Naive thymus-derived CD4-positive, alpha-beta T cell (primary cell): ENCODE measurements at regions of chr10 and their contacts with region 1.

Region 1: DNA sequence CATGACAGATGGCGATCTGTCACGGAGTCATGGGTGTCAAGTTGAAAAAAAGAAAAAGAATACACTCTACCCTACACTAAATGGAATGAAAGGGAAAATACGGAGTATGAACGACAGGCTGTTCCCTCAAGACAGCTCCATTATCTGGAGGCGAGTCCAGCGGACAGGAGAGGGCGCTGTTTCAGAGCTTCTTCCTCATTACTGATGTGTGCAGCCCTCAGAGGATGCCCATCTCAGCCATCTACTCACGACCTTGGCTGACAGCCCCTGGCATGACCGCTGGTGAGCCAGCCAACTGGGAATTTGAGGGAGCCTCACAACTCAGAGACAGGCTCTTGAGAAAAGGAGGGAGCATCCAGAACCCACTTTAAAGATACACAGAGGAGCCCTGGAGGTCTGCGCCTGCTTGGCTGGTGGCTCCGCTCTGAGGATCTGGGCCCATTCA is 49.6 kb upstream of the SMNDC1 start:
- DNase-seq: peak in 8 of 9 donors; percentile 49 to 75 (median 58)
- ATAC-seq: peak; percentile 73
- H3K4me3 ChIP-seq: no peak overlapping the region
- H3K4me3 Mint-ChIP-seq: peak overlapping the region in 6 of 10 donors; percentile 17 to 48 (median 25)
- H3K27ac ChIP-seq: no peak overlapping the region
- H3K27ac Mint-ChIP-seq: peak overlapping the region in 7 of 9 donors; percentile 14 to 97 (median 53)
- H3K4me1 ChIP-seq: peaks cover 43 to 47% of the 10 kb centered on the region in 2 donors
- H3K4me1 Mint-ChIP-seq: peaks cover 33 to 57% (median 50%) of the 10 kb centered on the region in 7 donors
- H3K27me3 ChIP-seq: no peaks in the 10 kb centered on the region
- H3K27me3 Mint-ChIP-seq: no peaks in the 10 kb centered on the region

Region 2: GRCh38 chr10:110137142-110137545 is 217.2 kb before region 1 on chr10:
- CTCF ChIA-PET with region 1: no interaction called
- POLR2A ChIA-PET with region 1: no interaction called
- intact Hi-C with region 1: loop called in 1 of 2 experiments (anchors 1 kb)
- DNase-seq: peak in 7 of 9 donors; percentile 48 to 67 (median 64)
- ATAC-seq: peak; percentile 85
- H3K4me3 ChIP-seq: no peak overlapping the region
- H3K4me3 Mint-ChIP-seq: peak overlapping the region in 1 of 10 donors; percentile 19
- H3K27ac ChIP-seq: peak overlapping the region; percentile 4
- H3K27ac Mint-ChIP-seq: peak overlapping the region; percentile 2 to 83 (median 45)
- H3K4me1 ChIP-seq: peaks cover 14% of the 10 kb centered on the region in 2 donors
- H3K4me1 Mint-ChIP-seq: peaks cover 13 to 38% (median 29%) of the 10 kb centered on the region in 7 donors
- H3K27me3 ChIP-seq: no peaks in the 10 kb centered on the region
- H3K27me3 Mint-ChIP-seq: no peaks in the 10 kb centered on the region

Region 3: GRCh38 chr10:110192552-110192951 is 161.8 kb before region 1 on chr10:
- CTCF ChIA-PET with region 1: no interaction called
- POLR2A ChIA-PET with region 1: no interaction called
- intact Hi-C with region 1: no loop called
- DNase-seq: no peak
- ATAC-seq: no peak
- H3K4me3 ChIP-seq: no peak overlapping the region
- H3K4me3 Mint-ChIP-seq: no peak overlapping the region
- H3K27ac ChIP-seq: no peak overlapping the region
- H3K27ac Mint-ChIP-seq: peak overlapping the region in 1 of 9 donors; percentile 2
- H3K4me1 ChIP-seq: no peaks in the 10 kb centered on the region
- H3K4me1 Mint-ChIP-seq: peaks cover 0 to 9% (median 0%) of the 10 kb centered on the region in 7 donors
- H3K27me3 ChIP-seq: peaks cover 0 to 10% of the 10 kb centered on the region in 2 donors
- H3K27me3 Mint-ChIP-seq: peaks cover 12 to 77% (median 33%) of the 10 kb centered on the region in 5 donors

Region 4: DNA sequence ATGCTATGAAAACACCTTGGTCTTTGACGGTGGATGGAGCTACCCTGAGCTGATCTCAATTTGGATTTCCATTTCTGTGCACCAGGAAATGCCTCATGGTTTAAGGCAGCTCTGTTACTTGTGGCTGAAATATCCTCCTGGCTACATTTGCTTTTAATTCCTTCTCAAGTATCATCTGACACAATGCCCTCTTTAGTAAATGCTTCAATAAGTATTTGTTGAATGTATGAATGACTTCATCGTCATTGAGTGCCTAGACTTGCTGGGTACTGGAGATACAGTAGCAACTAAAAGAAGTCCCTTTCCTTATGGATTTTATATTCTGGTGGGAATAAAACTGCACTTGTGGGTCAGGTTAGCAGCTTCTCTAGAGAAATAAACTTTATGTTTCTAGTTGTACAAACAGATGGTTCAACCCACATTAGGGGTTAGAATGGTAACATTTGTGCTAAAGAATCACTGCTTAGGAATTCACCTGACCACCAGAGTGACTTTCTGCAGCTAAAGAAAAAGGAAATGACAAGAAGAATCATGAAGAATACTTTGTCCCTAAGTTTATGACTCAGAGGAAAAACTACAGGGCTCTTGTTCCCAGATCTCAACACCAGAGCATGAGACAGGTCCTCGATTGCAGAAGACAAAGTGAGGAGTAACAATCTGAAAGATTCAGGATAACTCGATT is 27.9 kb before region 1 on chr10:
- CTCF ChIA-PET with region 1: no interaction called
- POLR2A ChIA-PET with region 1: no interaction called
- intact Hi-C with region 1: no loop called
- DNase-seq: no peak
- ATAC-seq: no peak
- H3K4me3 ChIP-seq: no peak overlapping the region
- H3K4me3 Mint-ChIP-seq: no peak overlapping the region
- H3K27ac ChIP-seq: no peak overlapping the region
- H3K27ac Mint-ChIP-seq: peak overlapping the region in 1 of 9 donors; percentile 21
- H3K4me1 ChIP-seq: no peaks in the 10 kb centered on the region
- H3K4me1 Mint-ChIP-seq: peaks cover 0 to 33% (median 0%) of the 10 kb centered on the region in 7 donors
- H3K27me3 ChIP-seq: no peaks in the 10 kb centered on the region
- H3K27me3 Mint-ChIP-seq: peaks cover 0 to 4% (median 0%) of the 10 kb centered on the region in 5 donors

Region 5: GRCh38 chr10:110376021-110376766 is 21.9 kb after region 1 on chr10:
- CTCF ChIA-PET with region 1: no interaction called
- POLR2A ChIA-PET with region 1: no interaction called
- intact Hi-C with region 1: no loop called
- DNase-seq: no peak
- ATAC-seq: peak; percentile 32
- H3K4me3 ChIP-seq: no peak overlapping the region
- H3K4me3 Mint-ChIP-seq: no peak overlapping the region
- H3K27ac ChIP-seq: no peak overlapping the region
- H3K27ac Mint-ChIP-seq: no peak overlapping the region
- H3K4me1 ChIP-seq: no peaks in the 10 kb centered on the region
- H3K4me1 Mint-ChIP-seq: peaks cover 0 to 12% (median 0%) of the 10 kb centered on the region in 7 donors
- H3K27me3 ChIP-seq: no peaks in the 10 kb centered on the region
- H3K27me3 Mint-ChIP-seq: peaks cover 0 to 4% (median 0%) of the 10 kb centered on the region in 5 donors

Region 6: DNA sequence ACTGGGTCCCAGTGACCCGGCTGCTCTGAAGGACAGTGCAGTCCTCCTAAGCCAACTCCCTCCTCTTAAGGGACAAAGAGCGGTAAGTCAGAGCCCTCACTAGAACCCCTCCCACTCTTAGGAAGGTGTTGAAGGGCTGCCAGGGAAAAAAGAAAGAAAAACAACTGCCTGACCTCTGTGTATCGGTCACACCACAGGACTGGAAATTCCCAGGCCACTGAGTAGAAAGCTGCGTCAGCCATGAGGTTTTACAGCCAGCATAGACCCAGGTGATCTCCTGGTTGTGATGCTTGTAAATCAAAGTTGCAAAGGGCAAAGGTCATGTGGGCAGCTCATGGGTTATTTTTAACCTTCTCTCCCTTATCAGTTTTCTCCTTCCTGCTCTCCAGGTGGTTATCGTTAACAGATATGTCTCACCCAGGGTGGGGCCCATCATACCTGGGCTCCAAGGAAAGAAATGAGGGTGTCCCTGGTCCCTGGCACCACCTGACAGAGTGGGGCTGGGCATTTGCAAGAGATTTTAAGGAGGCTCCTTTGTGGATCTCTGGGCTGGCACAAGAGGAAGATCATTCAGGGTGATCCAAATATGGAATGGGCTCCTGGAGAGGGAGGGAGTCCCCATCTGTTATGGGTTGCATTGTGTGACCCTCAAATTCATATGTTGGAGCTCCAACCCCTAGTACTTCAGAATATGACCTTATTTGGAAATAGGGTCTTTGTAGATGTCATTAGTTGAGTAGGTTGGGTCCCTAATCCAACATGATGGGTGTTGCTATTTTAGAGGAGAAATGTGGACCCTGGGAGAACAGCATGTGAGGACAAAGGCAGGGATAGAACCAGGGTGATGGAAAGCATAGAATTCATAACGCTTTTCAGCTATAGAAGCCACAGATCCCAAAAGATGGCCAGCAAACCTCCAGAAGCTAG is 41.6 kb after region 1 on chr10:
- CTCF ChIA-PET with region 1: no interaction called
- POLR2A ChIA-PET with region 1: no interaction called
- intact Hi-C with region 1: loop called in 1 of 2 experiments (anchors 1 kb)
- DNase-seq: peak in 1 of 9 donors; percentile 55
- ATAC-seq: peak; percentile 50
- H3K4me3 ChIP-seq: no peak overlapping the region
- H3K4me3 Mint-ChIP-seq: peak overlapping the region in 1 of 10 donors; percentile 9
- H3K27ac ChIP-seq: no peak overlapping the region
- H3K27ac Mint-ChIP-seq: peak overlapping the region in 2 of 9 donors; percentile 5 to 66
- H3K4me1 ChIP-seq: no peaks in the 10 kb centered on the region
- H3K4me1 Mint-ChIP-seq: peaks cover 0 to 47% (median 0%) of the 10 kb centered on the region in 7 donors
- H3K27me3 ChIP-seq: no peaks in the 10 kb centered on the region
- H3K27me3 Mint-ChIP-seq: peaks cover 0 to 8% (median 0%) of the 10 kb centered on the region in 5 donors

Region 7: GRCh38 chr10:110414563-110415309 is 60.4 kb after region 1 on chr10:
- CTCF ChIA-PET with region 1: no interaction called
- POLR2A ChIA-PET with region 1: no interaction called
- intact Hi-C with region 1: loop called (anchors 1 to 5 kb)
- DNase-seq: peak; percentile 42 to 84 (median 69)
- ATAC-seq: peak; percentile 96
- H3K4me3 ChIP-seq: no peak overlapping the region
- H3K4me3 Mint-ChIP-seq: peak overlapping the region in 9 of 10 donors; percentile 13 to 71 (median 40)
- H3K27ac ChIP-seq: no peak overlapping the region
- H3K27ac Mint-ChIP-seq: peak overlapping the region; percentile 20 to 88 (median 74)
- H3K4me1 ChIP-seq: peaks cover 14 to 35% of the 10 kb centered on the region in 2 donors
- H3K4me1 Mint-ChIP-seq: peaks cover 19 to 64% (median 26%) of the 10 kb centered on the region in 7 donors
- H3K27me3 ChIP-seq: no peaks in the 10 kb centered on the region
- H3K27me3 Mint-ChIP-seq: peaks cover 0 to 5% (median 0%) of the 10 kb centered on the region in 5 donors

Region 8: GRCh38 chr10:110502851-110503301 is 148.5 kb after region 1 on chr10:
- CTCF ChIA-PET with region 1: interaction called, 4 read pairs
- POLR2A ChIA-PET with region 1: interaction called, 3 read pairs
- intact Hi-C with region 1: loop called (anchors 1 kb)
- DNase-seq: peak in 1 of 9 donors; percentile 18
- ATAC-seq: peak; percentile 10
- H3K4me3 ChIP-seq: peak overlapping the region; percentile 17
- H3K4me3 Mint-ChIP-seq: peak overlapping the region; percentile 15 to 97 (median 70)
- H3K27ac ChIP-seq: peak overlapping the region; percentile 53
- H3K27ac Mint-ChIP-seq: peak overlapping the region; percentile 53 to 94 (median 81)
- H3K4me1 ChIP-seq: peaks cover 42 to 70% of the 10 kb centered on the region in 2 donors
- H3K4me1 Mint-ChIP-seq: peaks cover 55 to 88% (median 60%) of the 10 kb centered on the region in 7 donors
- H3K27me3 ChIP-seq: no peaks in the 10 kb centered on the region
- H3K27me3 Mint-ChIP-seq: peaks cover 0 to 3% (median 0%) of the 10 kb centered on the region in 5 donors

Region 9: GRCh38 chr10:110535958-110536891 is 181.9 kb after region 1 on chr10:
- CTCF ChIA-PET with region 1: no interaction called
- POLR2A ChIA-PET with region 1: no interaction called
- intact Hi-C with region 1: loop called (anchors 1 kb)
- DNase-seq: peak in 6 of 9 donors; percentile 10 to 70 (median 21)
- ATAC-seq: peak; percentile 94
- H3K4me3 ChIP-seq: no peak overlapping the region
- H3K4me3 Mint-ChIP-seq: peak overlapping the region in 2 of 10 donors; percentile 71 to 73
- H3K27ac ChIP-seq: no peak overlapping the region
- H3K27ac Mint-ChIP-seq: peak overlapping the region in 2 of 9 donors; percentile 48 to 74
- H3K4me1 ChIP-seq: peaks cover 7 to 9% of the 10 kb centered on the region in 2 donors
- H3K4me1 Mint-ChIP-seq: peaks cover 15 to 50% (median 17%) of the 10 kb centered on the region in 7 donors
- H3K27me3 ChIP-seq: no peaks in the 10 kb centered on the region
- H3K27me3 Mint-ChIP-seq: peaks cover 0 to 8% (median 0%) of the 10 kb centered on the region in 5 donors

Region 10: GRCh38 chr10:110547139-110547761 is 192.9 kb after region 1 on chr10:
- CTCF ChIA-PET with region 1: interaction called, 10 read pairs
- POLR2A ChIA-PET with region 1: interaction called, 3 read pairs
- intact Hi-C with region 1: loop called (anchors 1 kb)
- DNase-seq: peak in 7 of 9 donors; percentile 40 to 75 (median 68)
- ATAC-seq: peak; percentile 85
- H3K4me3 ChIP-seq: no peak overlapping the region
- H3K4me3 Mint-ChIP-seq: peak overlapping the region in 1 of 10 donors; percentile 2
- H3K27ac ChIP-seq: no peak overlapping the region
- H3K27ac Mint-ChIP-seq: peak overlapping the region in 2 of 9 donors; percentile 3 to 6
- H3K4me1 ChIP-seq: peaks cover 0 to 5% of the 10 kb centered on the region in 2 donors
- H3K4me1 Mint-ChIP-seq: peaks cover 3 to 16% (median 5%) of the 10 kb centered on the region in 7 donors
- H3K27me3 ChIP-seq: no peaks in the 10 kb centered on the region
- H3K27me3 Mint-ChIP-seq: peaks cover 0 to 39% (median 11%) of the 10 kb centered on the region in 5 donors

Region 11: DNA sequence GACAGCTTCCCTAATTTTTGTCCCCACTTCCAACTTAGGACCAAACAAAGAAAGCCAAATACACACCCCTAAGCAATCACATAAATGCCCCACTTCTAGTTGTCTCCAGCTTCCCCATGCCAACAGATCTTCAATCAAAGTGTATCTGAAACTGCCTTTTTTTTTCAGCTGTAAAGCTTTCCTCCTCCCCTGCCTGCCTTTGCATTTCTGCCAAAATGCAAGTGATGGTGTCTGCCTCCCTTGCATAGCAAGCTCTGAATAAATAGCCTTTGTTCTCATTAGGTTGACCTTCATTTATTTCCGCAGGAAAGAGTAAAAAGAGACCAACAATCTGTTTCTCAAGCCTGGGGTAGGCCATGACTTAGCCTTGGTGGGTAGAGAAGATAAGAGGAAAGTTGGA is 1369.8 kb after region 1 on chr10:
- CTCF ChIA-PET with region 1: no interaction called
- POLR2A ChIA-PET with region 1: no interaction called
- intact Hi-C with region 1: no loop called
- DNase-seq: no peak
- ATAC-seq: no peak
- H3K4me3 ChIP-seq: no peak overlapping the region
- H3K4me3 Mint-ChIP-seq: no peak overlapping the region
- H3K27ac ChIP-seq: no peak overlapping the region
- H3K27ac Mint-ChIP-seq: no peak overlapping the region
- H3K4me1 ChIP-seq: no peaks in the 10 kb centered on the region
- H3K4me1 Mint-ChIP-seq: no peaks in the 10 kb centered on the region
- H3K27me3 ChIP-seq: no peaks in the 10 kb centered on the region
- H3K27me3 Mint-ChIP-seq: peaks cover 0 to 5% (median 0%) of the 10 kb centered on the region in 5 donors